Left cardiac atrium (tissue), 4 donors: ENCODE measurements at regions of chr10 and their contacts with region 1.

Region 1: GRCh38 chr10:31808258-31809218 is 120.1 kb downstream of the ARHGAP12 start:
- DNase-seq: peak; percentile 41
- ATAC-seq: peak; percentile 79 to 88

Region 2: GRCh38 chr10:30742471-30742870 is 1066.1 kb before region 1 on chr10:
- intact Hi-C with region 1: loop called in 1 of 2 experiments (anchors 10 kb)
- DNase-seq: no peak
- ATAC-seq: no peak

Region 3: GRCh38 chr10:30751678-30752331 is 1056.7 kb before region 1 on chr10:
- intact Hi-C with region 1: loop called (anchors 2 to 10 kb)
- DNase-seq: peak; percentile 84
- ATAC-seq: peak; percentile 65 to 81

Region 4: GRCh38 chr10:31707093-31708039 is 101.2 kb before region 1 on chr10:
- intact Hi-C with region 1: loop called in 1 of 2 experiments (anchors 10 kb)
- DNase-seq: peak; percentile 87
- ATAC-seq: peak; percentile 72 to 92

Region 5: DNA sequence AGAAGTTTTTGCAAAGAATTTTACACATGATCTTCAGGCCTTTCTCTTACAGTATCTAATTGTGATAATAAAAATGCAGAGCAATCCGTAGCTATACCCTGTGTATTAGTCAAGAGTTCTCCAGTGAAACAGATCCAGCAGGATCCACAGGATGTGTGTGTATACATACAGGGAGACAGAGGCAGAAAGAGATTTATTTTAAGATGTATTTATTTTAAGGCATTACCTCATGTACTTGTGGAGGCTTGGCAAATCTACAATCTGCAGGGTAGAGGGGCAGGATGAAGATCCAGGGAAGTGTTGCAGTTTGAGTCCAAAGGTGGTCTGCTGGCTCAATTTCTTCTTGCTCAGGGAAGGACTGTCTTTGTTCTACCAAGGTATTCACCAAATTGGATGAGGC is 78.3 kb after region 1 on chr10:
- intact Hi-C with region 1: no loop called
- DNase-seq: no peak
- ATAC-seq: peak; percentile 46 to 72

Region 6: GRCh38 chr10:32481606-32482005 is 673.1 kb after region 1 on chr10:
- intact Hi-C with region 1: no loop called
- DNase-seq: no peak
- ATAC-seq: no peak